ENCODE measurements at regions of chr17 and their contacts with region 1.

Region 1: GRCh38 chr17:51153210-51154072 is at the start of gene NME1:
- DNase-seq: peak; percentile 97 to 99
- H3K4me3 ChIP-seq: peak within 1 kb of the TSS; percentile 60 to 96 (median 78)
- H3K27ac ChIP-seq: peak within 1 kb of the TSS; percentile 79 to 88 (median 86)
- H3K4me1 ChIP-seq: peaks cover 11 to 30% (median 19%) of the 10 kb centered on the region in 4 donors
- H3K27me3 ChIP-seq: no peaks in the 10 kb centered on the region
- CTCF ChIP-seq: peak in 5 of 7 experiments; percentile 53 to 95 (median 75)
- EP300 ChIP-seq: no peak
- POLR2A ChIP-seq: no peak
- total RNA-seq, gene NME1: 2.2 to 44.1 (median 18.0) TPM in 4 of 5 donors, not detected in the other

Region 2: GRCh38 chr17:51000835-51001638 is 152.4 kb before region 1 on chr17:
- intact Hi-C with region 1: loop called (anchors 5 kb)
- DNase-seq: peak in 1 of 2 donors; percentile 87
- H3K4me3 ChIP-seq: no peak overlapping the region
- H3K27ac ChIP-seq: no peak overlapping the region
- H3K4me1 ChIP-seq: no peaks in the 10 kb centered on the region
- H3K27me3 ChIP-seq: no peaks in the 10 kb centered on the region
- CTCF ChIP-seq: peak in 4 of 7 experiments; percentile 27 to 68 (median 44)
- EP300 ChIP-seq: no peak
- POLR2A ChIP-seq: no peak